ENCODE measurements at regions of chr9 and their contacts with region 1.

Region 1: DNA sequence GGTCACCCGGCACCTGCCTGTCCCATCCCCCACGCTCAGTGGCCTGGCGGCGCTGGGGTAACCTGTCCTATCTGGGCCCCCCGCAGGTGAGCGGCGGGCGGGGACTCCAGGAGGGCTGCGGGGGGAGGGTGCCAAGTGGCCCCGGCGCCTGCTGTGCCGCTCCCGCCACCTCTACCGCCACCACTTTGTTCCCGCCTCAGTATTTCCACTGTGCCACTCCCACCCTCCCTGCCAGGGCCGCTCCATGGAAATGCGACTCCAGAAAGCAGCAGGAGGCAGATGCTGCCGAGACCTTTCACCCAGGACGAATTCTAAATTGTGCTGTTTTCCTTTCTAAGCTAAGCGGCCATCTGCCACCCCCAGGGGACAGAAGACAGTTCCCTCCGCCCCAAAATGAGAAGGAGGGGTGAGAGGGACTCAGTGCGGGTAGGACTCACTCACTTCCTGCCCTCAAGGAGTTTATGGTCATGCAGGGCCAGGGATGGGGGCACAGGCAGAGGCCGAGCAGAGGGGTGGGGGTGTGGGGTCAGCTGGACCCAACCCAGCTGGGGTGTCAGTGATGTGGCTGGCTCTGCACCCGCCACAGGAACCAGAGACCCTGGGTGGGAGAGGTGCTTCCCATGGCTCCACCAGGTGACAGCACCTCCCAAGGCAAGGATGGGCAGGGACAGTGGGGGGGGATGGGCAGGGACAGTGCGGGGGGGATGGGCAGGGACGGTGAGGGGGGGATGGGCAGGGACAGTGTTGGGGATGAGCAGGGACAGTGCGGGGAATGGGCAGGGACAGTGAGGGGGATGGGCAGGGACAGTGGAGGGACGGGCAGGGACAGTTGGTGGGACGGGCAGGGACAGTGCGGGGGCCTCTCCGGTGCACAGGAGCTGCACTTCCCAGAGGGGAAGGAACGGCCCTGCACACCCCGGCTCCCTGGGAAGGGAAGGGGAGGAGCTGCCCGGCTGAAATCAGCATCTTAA is 17.8 kb downstream of the NOTCH1 start:
- DNase-seq: no peak
- ATAC-seq: peak; percentile 22
- H3K4me3 Mint-ChIP-seq: no peak overlapping the region
- H3K27ac Mint-ChIP-seq: peak overlapping the region; percentile 30
- H3K4me1 Mint-ChIP-seq: peaks cover 25% of the 10 kb centered on the region
- H3K27me3 Mint-ChIP-seq: no peaks in the 10 kb centered on the region
- CTCF ChIP-seq: no peak

Region 2: GRCh38 chr9:136539427-136540421 is 11.7 kb after region 1 on chr9:
- CTCF ChIA-PET with region 1: interaction called, 10 read pairs
- POLR2A ChIA-PET with region 1: interaction called, 16 read pairs
- intact Hi-C with region 1: no loop called
- DNase-seq: peak; percentile 98
- ATAC-seq: peak; percentile 85
- H3K4me3 Mint-ChIP-seq: peak overlapping the region; percentile 72
- H3K27ac Mint-ChIP-seq: peak overlapping the region; percentile 99
- H3K4me1 Mint-ChIP-seq: peaks cover 61% of the 10 kb centered on the region
- H3K27me3 Mint-ChIP-seq: no peaks in the 10 kb centered on the region
- CTCF ChIP-seq: no peak

Region 3: DNA sequence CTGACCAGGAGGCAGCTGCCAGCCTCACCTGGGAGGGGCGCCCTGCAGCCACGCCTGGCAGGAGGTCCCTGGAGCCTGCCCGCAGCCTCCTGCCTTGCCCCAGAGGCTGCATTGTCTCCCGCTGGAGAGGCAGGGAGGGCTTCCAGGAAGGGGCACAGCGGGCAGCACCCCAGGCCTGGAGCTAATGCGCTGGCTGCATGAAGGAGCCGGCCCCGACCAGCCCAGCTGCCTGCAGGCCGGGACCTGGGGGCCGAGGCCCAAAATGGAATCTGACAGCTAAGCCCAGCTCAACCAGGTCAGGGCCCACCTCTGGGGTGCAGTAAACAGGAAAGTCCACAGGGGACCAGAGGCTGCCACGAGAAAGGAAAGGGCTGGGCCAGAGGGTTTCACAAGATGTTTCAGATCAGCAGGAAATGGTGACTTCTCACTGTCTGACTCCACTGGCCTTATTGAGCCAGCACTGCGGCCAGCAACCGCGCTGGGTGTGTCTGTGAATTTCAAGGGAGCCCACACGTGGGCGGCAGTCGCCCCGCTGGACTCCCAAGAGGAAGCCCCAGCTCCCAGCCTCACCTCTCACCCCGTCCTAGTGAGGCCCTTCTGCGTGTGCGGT is 36.5 kb after region 1 on chr9:
- CTCF ChIA-PET with region 1: no interaction called
- POLR2A ChIA-PET with region 1: no interaction called
- intact Hi-C with region 1: no loop called
- DNase-seq: no peak
- ATAC-seq: peak; percentile 27
- H3K4me3 Mint-ChIP-seq: no peak overlapping the region
- H3K27ac Mint-ChIP-seq: no peak overlapping the region
- H3K4me1 Mint-ChIP-seq: no peaks in the 10 kb centered on the region
- H3K27me3 Mint-ChIP-seq: no peaks in the 10 kb centered on the region
- CTCF ChIP-seq: no peak

Measured in activated CD8-positive, alpha-beta T cell treated with anti-CD3 and anti-CD28 coated beads for 36 hours (primary cell).